Activated CD4-positive, alpha-beta T cell treated with anti-CD3 and anti-CD28 coated beads, Interleukin-2, amount 10 ng/mL, durations not matched to agents 7 days and 5 days (primary cell): ENCODE measurements at regions of chr3 and their contacts with region 1.

Region 1: GRCh38 chr3:111967651-111968274 is 11.1 kb upstream of the ABHD10 start:
- DNase-seq: peak; percentile 87
- H3K4me3 Mint-ChIP-seq: no peak overlapping the region
- H3K27ac Mint-ChIP-seq: no peak overlapping the region
- H3K4me1 Mint-ChIP-seq: peaks cover 8% of the 10 kb centered on the region
- H3K27me3 Mint-ChIP-seq: peaks cover 6% of the 10 kb centered on the region

Region 2: GRCh38 chr3:111668912-111669488 is 298.8 kb before region 1 on chr3:
- CTCF ChIA-PET with region 1: interaction called, 11 read pairs
- POLR2A ChIA-PET with region 1: no interaction called
- DNase-seq: no peak
- H3K4me3 Mint-ChIP-seq: no peak overlapping the region
- H3K27ac Mint-ChIP-seq: peak overlapping the region; percentile 76
- H3K4me1 Mint-ChIP-seq: peaks cover 82% of the 10 kb centered on the region
- H3K27me3 Mint-ChIP-seq: no peaks in the 10 kb centered on the region

Region 3: DNA sequence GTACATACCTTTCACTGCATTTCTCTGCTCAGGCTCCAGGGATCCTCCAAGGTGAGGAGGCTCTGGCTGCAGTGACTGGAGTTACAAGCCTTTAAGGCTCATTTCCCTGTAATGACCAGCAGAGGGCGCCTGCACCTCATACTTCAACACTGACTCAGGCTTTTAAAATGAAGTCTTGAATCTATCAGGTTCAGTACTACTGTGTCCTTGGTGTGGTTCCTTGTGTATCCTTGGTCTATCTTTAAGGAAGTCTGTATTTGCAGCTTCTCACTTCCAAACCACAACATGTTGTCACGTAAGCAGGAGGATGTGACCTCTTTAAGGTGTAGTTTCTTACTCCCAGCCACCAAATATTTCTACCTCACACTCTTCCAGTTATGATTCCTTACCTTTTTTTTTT is 250.2 kb before region 1 on chr3:
- CTCF ChIA-PET with region 1: interaction called, 20 read pairs
- POLR2A ChIA-PET with region 1: no interaction called
- DNase-seq: peak; percentile 78
- H3K4me3 Mint-ChIP-seq: no peak overlapping the region
- H3K27ac Mint-ChIP-seq: peak overlapping the region; percentile 79
- H3K4me1 Mint-ChIP-seq: peaks cover 8% of the 10 kb centered on the region
- H3K27me3 Mint-ChIP-seq: no peaks in the 10 kb centered on the region

Region 4: DNA sequence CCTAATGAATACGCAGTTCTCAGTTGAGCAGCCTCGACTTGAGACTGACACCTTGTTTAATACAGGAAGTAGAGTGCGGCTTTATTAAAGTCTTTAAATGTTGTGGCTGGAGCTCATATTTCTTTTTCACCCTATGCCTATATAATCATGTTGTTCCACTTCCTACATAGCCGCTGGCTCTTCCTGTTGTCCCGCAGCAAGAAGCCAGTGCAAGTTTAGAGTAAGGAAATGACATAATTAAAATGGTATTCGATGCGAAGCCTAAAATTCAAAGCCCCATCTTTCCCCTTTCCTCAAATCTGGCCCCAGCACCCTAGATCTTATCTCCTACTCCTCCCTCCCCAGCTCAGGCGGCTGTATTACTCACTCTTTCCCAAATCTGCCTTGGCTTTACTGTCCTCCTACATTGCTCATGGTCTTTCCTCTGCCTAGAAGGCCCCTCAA is 116.2 kb before region 1 on chr3:
- CTCF ChIA-PET with region 1: no interaction called
- POLR2A ChIA-PET with region 1: no interaction called
- DNase-seq: no peak
- H3K4me3 Mint-ChIP-seq: no peak overlapping the region
- H3K27ac Mint-ChIP-seq: no peak overlapping the region
- H3K4me1 Mint-ChIP-seq: peaks cover 5% of the 10 kb centered on the region
- H3K27me3 Mint-ChIP-seq: peaks cover 5% of the 10 kb centered on the region